Dorsolateral prefrontal cortex (tissue), 120 donors: ENCODE measurements at regions of chr9 and their contacts with region 1.

Region 1: GRCh38 chr9:117403403-117403811 is 11.4 kb downstream of the ASTN2 start:
- DNase-seq: peak; percentile 35 to 84 (median 76)
- H3K4me3 ChIP-seq: peak overlapping the region in 23 of 59 donors; percentile 2 to 37 (median 22)
- H3K27ac ChIP-seq: peak overlapping the region; percentile 22 to 98 (median 89)
- H3K27me3 ChIP-seq: no peaks in the 10 kb centered on the region
- CTCF ChIP-seq: peak in 1 of 56 donors; percentile 5

Region 2: GRCh38 chr9:117073539-117074341 is 329.7 kb before region 1 on chr9:
- intact Hi-C with region 1: loop called (anchors 2 kb)
- DNase-seq: peak in 9 of 10 donors; percentile 51 to 76 (median 58)
- H3K4me3 ChIP-seq: no peak overlapping the region
- H3K27ac ChIP-seq: no peak overlapping the region
- H3K27me3 ChIP-seq: no peaks in the 10 kb centered on the region
- CTCF ChIP-seq: peak; percentile 58 to 87 (median 75)

Region 3: DNA sequence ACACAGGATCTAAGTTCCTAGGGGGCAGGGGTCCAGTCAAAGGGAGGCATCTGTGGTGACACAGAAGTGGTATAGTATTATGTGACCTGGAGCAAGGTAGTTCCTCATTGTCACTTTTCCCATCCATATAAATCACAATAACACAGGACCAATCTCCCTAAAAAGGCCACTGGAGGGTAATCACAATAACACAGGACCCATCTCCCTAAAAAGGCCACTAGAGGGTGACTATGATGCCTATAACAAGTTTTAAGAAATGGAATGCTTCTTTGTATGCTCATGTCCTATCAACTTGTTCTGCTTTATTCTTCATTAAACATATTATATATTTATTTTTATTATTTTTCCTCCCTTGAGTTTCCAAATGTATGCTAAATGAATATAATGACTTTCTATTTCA is 243.2 kb before region 1 on chr9:
- intact Hi-C with region 1: loop called in 1 of 2 experiments (anchors 10 kb)
- DNase-seq: no peak
- H3K4me3 ChIP-seq: no peak overlapping the region
- H3K27ac ChIP-seq: no peak overlapping the region
- H3K27me3 ChIP-seq: no peaks in the 10 kb centered on the region
- CTCF ChIP-seq: peak in 48 of 56 donors; percentile 13 to 67 (median 40)

Region 4: DNA sequence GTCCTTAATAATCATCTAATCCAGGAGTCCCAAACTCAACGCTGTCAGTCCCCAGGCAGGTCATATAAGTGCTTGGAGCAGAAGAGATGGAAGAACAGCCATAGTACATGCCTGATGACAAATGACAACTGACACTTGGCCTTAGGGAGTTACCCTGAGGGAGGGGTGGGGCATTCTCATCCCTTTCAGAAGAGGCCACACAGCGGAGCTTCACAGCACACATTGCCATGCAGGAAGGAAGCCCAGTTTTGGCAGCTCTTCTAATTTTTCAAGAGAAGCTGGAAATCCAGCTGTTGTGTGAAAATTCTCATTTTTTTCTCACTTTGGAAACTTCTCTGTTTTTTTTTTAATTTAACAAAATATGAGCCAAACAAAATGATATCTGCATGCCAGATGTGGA is 77.6 kb before region 1 on chr9:
- intact Hi-C with region 1: loop called in 1 of 2 experiments (anchors 2 kb)
- DNase-seq: peak in 1 of 10 donors; percentile 9
- H3K4me3 ChIP-seq: no peak overlapping the region
- H3K27ac ChIP-seq: no peak overlapping the region
- H3K27me3 ChIP-seq: no peaks in the 10 kb centered on the region
- CTCF ChIP-seq: peak in 1 of 56 donors; percentile 14